ENCODE measurements at regions of chr2 and their contacts with region 1.

Region 1: DNA sequence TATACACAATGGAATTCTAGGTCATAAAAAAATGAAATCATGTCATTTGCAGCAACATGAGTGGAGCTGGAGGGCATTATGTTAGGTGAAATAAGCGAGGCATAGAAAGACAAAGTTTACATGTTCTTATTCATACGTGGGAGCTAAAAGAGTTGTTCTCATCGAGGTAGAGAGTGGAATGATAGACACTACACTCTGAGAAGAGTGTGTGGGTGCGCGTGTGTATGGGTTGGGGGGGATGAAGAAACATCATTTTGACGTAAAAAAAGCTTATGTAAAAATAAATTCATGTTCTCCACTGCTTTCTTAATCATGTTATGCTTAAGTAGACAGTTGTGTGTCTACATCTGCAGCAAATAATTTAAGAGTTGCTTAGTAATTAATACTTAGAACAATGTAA is 123.6 kb downstream of the ZNF804A start:
- DNase-seq: no peak
- ATAC-seq: no peak
- H3K4me3 ChIP-seq: no peak overlapping the region
- H3K4me3 Mint-ChIP-seq: no peak overlapping the region
- H3K27ac ChIP-seq: no peak overlapping the region
- H3K27ac Mint-ChIP-seq: no peak overlapping the region
- H3K4me1 ChIP-seq: no peaks in the 10 kb centered on the region
- H3K4me1 Mint-ChIP-seq: no peaks in the 10 kb centered on the region
- H3K27me3 ChIP-seq: no peaks in the 10 kb centered on the region
- H3K27me3 Mint-ChIP-seq: no peaks in the 10 kb centered on the region
- CTCF ChIP-seq: no peak

Region 2: GRCh38 chr2:184780944-184781343 is 59.1 kb after region 1 on chr2:
- CTCF ChIA-PET with region 1: no interaction called
- POLR2A ChIA-PET with region 1: no interaction called
- intact Hi-C with region 1: loop called in 1 of 2 experiments (anchors 5 kb)
- DNase-seq: no peak
- ATAC-seq: no peak
- H3K4me3 ChIP-seq: no peak overlapping the region
- H3K4me3 Mint-ChIP-seq: no peak overlapping the region
- H3K27ac ChIP-seq: no peak overlapping the region
- H3K27ac Mint-ChIP-seq: no peak overlapping the region
- H3K4me1 ChIP-seq: no peaks in the 10 kb centered on the region
- H3K4me1 Mint-ChIP-seq: no peaks in the 10 kb centered on the region
- H3K27me3 ChIP-seq: no peaks in the 10 kb centered on the region
- H3K27me3 Mint-ChIP-seq: no peaks in the 10 kb centered on the region
- CTCF ChIP-seq: no peak